Panc1 (cell line): ENCODE measurements at regions of chr3 and their contacts with region 1.

Region 1: GRCh38 chr3:160449636-160450598 is at the start of gene TRIM59:
- DNase-seq: peak; percentile 75
- ATAC-seq: peak; percentile 94
- H3K4me3 ChIP-seq: peak within 1 kb of the TSS; percentile 82 to 83
- H3K27ac ChIP-seq: peak within 1 kb of the TSS; percentile 95
- H3K4me1 ChIP-seq: peaks cover 17% of the 10 kb centered on the region
- H3K27me3 ChIP-seq: no peaks in the 10 kb centered on the region
- CTCF ChIP-seq: no peak
- total RNA-seq, gene TRIM59: 27.9 TPM

Region 2: DNA sequence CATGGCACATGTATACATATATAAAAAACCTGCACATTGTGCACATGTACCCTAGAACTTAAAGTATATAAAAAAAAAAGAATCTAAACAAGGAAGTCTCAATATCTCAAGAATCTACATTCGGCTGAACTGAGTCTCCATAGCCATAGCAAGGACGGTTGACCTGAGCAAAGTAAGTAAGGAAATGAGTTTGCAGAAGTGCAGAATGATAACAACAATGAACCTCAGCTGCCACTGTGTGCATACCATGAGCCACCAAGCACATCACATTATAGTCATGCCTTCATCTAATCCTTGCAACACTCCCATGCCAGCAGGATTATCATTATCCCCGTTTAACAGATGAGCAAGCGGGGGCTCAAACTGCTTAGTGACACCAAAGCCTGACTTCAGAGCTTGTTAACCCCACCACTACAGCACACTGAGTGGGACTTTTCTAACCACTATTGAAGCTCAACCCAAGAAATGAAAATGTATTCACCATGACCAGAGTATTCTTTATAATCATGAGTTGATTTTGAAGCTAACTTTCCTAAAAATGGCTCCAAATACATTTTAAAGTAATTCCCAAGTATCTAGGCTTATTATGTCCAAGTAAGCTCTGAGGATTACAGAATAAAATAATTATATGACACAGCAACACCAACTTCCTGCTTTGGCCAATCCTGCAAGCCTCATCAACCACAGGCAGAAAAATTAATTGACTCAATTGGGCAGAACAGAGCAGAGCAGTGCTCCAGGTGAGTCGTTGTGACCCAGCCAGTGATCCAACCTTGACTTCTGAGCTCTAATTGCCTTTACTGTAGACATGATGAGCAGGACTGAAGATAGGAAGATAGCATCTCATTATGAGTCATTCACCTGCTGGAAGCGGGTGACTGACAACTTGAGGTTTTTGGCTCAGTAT is 508.6 kb before region 1 on chr3:
- CTCF ChIA-PET with region 1: no interaction called
- POLR2A ChIA-PET with region 1: no interaction called
- in situ Hi-C with region 1: no loop called
- intact Hi-C with region 1: no loop called
- DNase-seq: no peak
- ATAC-seq: no peak
- H3K4me3 ChIP-seq: no peak overlapping the region
- H3K27ac ChIP-seq: no peak overlapping the region
- H3K4me1 ChIP-seq: no peaks in the 10 kb centered on the region
- H3K27me3 ChIP-seq: peaks cover 2% of the 10 kb centered on the region; the same call in 1 of the 2 replicates
- CTCF ChIP-seq: no peak

Region 3: DNA sequence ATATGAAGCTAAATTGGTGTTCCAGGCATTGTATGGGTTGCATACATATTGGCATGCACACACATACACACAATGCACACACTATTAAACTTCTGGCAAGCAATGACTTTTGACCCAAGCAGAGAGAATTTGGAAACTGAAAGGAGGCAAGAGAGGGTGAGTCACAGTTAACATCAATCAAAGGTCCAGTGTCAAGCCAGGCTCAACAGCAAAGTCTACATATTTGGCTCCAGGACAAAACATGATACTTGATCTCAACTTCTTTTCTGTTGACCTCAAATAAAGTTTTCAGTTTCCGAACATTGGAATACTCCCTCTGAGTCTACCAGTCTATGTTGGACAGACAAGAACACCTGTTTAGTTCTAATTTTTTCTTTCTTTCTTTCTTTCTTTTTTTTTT is 432.9 kb before region 1 on chr3:
- CTCF ChIA-PET with region 1: no interaction called
- POLR2A ChIA-PET with region 1: interaction called, 24 read pairs
- in situ Hi-C with region 1: no loop called
- intact Hi-C with region 1: no loop called
- DNase-seq: no peak
- ATAC-seq: no peak
- H3K4me3 ChIP-seq: no peak overlapping the region
- H3K27ac ChIP-seq: no peak overlapping the region
- H3K4me1 ChIP-seq: no peaks in the 10 kb centered on the region
- H3K27me3 ChIP-seq: peaks cover 5% of the 10 kb centered on the region; the same call in 1 of the 2 replicates
- CTCF ChIP-seq: no peak

Region 4: GRCh38 chr3:160245261-160245800 is 204.6 kb before region 1 on chr3:
- CTCF ChIA-PET with region 1: no interaction called
- POLR2A ChIA-PET with region 1: no interaction called
- in situ Hi-C with region 1: no loop called
- intact Hi-C with region 1: no loop called
- DNase-seq: no peak
- ATAC-seq: no peak
- H3K4me3 ChIP-seq: no peak overlapping the region
- H3K27ac ChIP-seq: no peak overlapping the region
- H3K4me1 ChIP-seq: no peaks in the 10 kb centered on the region
- H3K27me3 ChIP-seq: peaks cover 4% of the 10 kb centered on the region; the same call in 1 of the 2 replicates
- CTCF ChIP-seq: no peak

Region 5: DNA sequence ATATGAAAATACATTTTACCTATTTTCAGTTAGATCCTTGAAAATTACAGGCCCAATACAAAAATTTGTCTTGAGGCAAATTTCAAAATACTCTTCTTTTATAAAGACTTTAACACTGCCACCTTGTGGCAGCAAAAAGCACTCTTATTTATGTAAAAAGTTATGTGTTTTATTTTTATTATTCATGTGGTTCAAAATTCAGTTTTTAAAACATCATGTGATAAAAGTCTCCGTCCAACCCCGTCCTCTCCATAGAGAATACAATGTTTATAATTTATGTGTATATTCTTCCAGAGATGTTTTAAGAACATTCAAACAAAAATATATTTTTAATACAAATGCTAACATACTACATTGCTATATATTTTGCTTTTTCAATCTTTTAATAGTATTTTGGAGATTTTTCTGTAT is 36.5 kb after region 1 on chr3:
- CTCF ChIA-PET with region 1: no interaction called
- POLR2A ChIA-PET with region 1: no interaction called
- in situ Hi-C with region 1: no loop called
- intact Hi-C with region 1: loop called (anchors 2 kb)
- DNase-seq: no peak
- ATAC-seq: no peak
- H3K4me3 ChIP-seq: no peak overlapping the region
- H3K27ac ChIP-seq: no peak overlapping the region
- H3K4me1 ChIP-seq: 0 out of 2 replicates have a peak, but pooled peaks cover 3% of the 10 kb centered on the region
- H3K27me3 ChIP-seq: no peaks in the 10 kb centered on the region
- CTCF ChIP-seq: peak; percentile 64; the same call in 1 of the 2 replicates